OCI-LY7 (cell line): ENCODE measurements at regions of chr11 and their contacts with region 1.

Region 1: DNA sequence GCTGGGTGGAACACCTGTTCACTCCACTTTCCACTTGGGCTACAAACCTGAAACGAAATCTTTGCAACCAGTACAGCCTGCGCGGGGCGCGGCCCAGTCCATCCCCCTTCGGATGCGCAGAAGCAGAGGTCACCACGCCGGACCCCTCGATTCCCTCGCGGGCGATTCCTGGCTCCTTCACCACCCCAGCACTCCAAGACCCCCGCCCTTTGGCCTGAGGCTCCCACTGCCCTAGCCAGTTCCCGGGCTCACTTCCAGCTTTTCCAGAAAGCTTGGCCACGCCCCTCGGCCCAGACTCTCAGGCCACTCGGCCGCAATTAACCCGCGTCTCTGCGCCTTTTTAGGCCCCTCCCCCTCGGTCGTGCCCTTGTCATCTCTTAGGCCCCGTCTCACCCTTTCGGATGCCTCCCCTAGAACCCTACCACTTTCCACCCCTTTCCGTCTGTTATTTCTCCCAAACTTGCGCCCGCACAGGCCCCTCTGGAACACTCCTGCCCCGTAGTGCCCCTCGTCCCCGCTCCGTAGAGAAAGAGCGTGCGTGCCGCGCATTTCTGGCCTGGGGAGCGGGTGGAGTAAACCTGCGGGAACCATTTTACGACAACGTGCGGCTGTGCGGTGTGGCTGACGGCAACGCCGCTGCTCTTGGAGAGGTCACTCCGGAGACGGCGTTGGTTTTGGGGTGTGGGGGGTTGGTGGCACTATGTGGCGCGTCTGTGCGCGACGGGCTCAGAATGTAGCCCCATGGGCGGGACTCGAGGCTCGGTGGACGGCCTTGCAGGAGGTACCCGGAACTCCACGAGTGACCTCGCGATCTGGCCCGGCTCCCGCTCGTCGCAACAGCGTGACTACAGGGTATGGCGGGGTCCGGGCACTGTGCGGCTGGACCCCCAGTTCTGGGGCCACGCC is at the start of gene DLAT:
- DNase-seq: peak; percentile 88
- H3K4me3 ChIP-seq: peak within 1 kb of the TSS; percentile 87
- H3K27ac ChIP-seq: peak within 1 kb of the TSS; percentile 82
- H3K4me1 ChIP-seq: peaks cover 23% of the 10 kb centered on the region
- CTCF ChIP-seq: no peak
- total RNA-seq, gene DLAT: 34.5 and 42.0 TPM in 2 replicates

Region 2: DNA sequence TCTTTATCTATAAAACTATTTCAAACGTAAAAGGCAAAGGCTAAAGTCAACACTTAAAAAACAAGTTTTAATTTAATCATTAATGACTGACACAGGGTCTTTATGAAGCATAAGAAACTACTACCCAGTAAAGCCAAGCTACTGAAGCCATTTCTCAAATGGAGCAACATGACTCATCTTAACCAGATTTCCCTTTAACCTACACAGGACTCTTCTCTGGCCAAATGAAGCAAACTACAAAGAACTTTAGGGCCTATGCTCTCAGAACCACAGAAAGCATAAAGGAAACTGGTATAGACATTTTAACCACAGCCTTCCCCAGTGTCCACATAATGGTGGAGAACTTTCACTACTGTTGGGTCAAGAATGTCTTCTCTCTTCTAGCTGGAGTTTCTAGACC is 188.3 kb before region 1 on chr11:
- CTCF ChIA-PET with region 1: no interaction called
- POLR2A ChIA-PET with region 1: no interaction called
- intact Hi-C with region 1: no loop called
- DNase-seq: no peak
- H3K4me3 ChIP-seq: no peak overlapping the region
- H3K27ac ChIP-seq: no peak overlapping the region
- H3K4me1 ChIP-seq: no peaks in the 10 kb centered on the region
- CTCF ChIP-seq: no peak

Region 3: GRCh38 chr11:112050721-112051120 is 25.7 kb after region 1 on chr11:
- CTCF ChIA-PET with region 1: no interaction called
- POLR2A ChIA-PET with region 1: interaction called, 3 read pairs
- intact Hi-C with region 1: loop called (anchors 2 kb)
- DNase-seq: peak; percentile 72
- H3K4me3 ChIP-seq: peak overlapping the region; percentile 55
- H3K27ac ChIP-seq: peak overlapping the region; percentile 79
- H3K4me1 ChIP-seq: peaks cover 47% of the 10 kb centered on the region
- CTCF ChIP-seq: no peak

Region 4: GRCh38 chr11:112074026-112074811 is 49.2 kb after region 1 on chr11 and contains the start of gene NKAPD1:
- CTCF ChIA-PET with region 1: no interaction called
- POLR2A ChIA-PET with region 1: interaction called, 3 read pairs
- intact Hi-C with region 1: loop called (anchors 1 kb)
- DNase-seq: peak; percentile 80
- H3K4me3 ChIP-seq: peak within 1 kb of the TSS; percentile 96
- H3K27ac ChIP-seq: peak within 1 kb of the TSS; percentile 63
- H3K4me1 ChIP-seq: peaks cover 16% of the 10 kb centered on the region
- CTCF ChIP-seq: no peak
- total RNA-seq, gene NKAPD1: 21.3 and 39.6 TPM in 2 replicates